PC-3 (cell line): ENCODE measurements at regions of chr6 and their contacts with region 1.

Region 1: GRCh38 chr6:35583893-35584688 is 71.4 kb upstream of the TULP1 start:
- DNase-seq: peak; percentile 85
- ATAC-seq: peak; percentile 87
- H3K4me3 ChIP-seq: no peak overlapping the region
- H3K27ac ChIP-seq: no peak overlapping the region
- H3K4me1 ChIP-seq: no peaks in the 10 kb centered on the region; the same call in 1 of the 2 replicates
- H3K27me3 ChIP-seq: no peaks in the 10 kb centered on the region
- CTCF ChIP-seq: peak; percentile 93

Region 2: GRCh38 chr6:34757687-34758274 is 826.3 kb before region 1 on chr6:
- CTCF ChIA-PET with region 1: no interaction called
- POLR2A ChIA-PET with region 1: no interaction called
- intact Hi-C with region 1: no loop called
- DNase-seq: no peak
- ATAC-seq: no peak
- H3K4me3 ChIP-seq: peak overlapping the region; percentile 82
- H3K27ac ChIP-seq: peak overlapping the region; percentile 88
- H3K4me1 ChIP-seq: no peaks in the 10 kb centered on the region
- H3K27me3 ChIP-seq: no peaks in the 10 kb centered on the region
- CTCF ChIP-seq: no peak

Region 3: DNA sequence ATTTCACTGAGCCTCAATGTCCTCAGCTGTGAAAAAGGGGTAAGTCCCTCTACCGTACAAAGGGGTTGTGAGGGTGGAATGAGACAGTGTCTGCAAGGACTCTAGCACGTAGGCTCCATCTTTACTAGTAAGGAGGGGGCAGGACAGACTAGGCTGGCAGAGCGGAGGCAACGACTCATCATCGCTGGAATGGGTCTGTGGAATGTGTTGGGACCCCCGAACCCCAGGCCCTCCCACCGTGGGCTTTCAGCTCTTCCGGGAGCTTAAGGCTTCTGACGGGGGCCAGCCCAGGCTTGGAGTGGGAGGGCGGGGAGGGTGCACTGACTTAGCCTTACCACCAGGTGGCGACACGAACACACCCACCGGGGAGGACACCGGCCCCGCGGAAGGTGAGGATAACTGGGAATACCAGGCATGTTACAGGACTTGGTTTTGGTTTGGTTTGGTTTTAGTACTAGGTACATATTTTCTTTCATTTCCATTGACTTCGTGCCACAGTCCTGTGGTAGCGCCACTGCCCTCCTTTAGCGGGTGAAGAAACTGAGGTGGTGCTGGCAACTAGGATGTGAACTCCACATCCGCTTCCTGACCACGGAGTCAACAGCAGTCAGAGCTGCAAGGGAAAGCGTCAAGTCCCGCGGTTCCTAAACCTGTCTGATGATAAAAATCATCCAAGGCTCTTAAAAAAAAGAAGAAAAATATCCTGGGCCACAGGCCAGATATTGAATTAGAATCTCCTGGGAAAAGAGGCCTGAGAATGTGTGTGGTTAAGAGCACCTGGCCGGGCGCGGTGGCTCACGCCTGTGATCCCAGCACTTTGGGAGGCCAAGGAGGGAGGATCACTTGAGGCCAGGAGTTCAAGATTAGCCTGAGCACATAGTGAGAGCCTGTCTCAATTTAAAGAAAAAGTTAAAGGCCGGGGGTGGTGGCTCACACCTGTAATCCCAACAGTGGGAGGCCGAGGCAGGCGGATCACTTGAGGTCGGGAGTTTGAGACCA is 61.1 kb before region 1 on chr6:
- CTCF ChIA-PET with region 1: no interaction called
- POLR2A ChIA-PET with region 1: no interaction called
- intact Hi-C with region 1: loop called (anchors 2 kb)
- DNase-seq: peak; percentile 82
- ATAC-seq: peak; percentile 98
- H3K4me3 ChIP-seq: peak overlapping the region; percentile 62
- H3K27ac ChIP-seq: no peak overlapping the region
- H3K4me1 ChIP-seq: no peaks in the 10 kb centered on the region
- H3K27me3 ChIP-seq: no peaks in the 10 kb centered on the region
- CTCF ChIP-seq: peak; percentile 90

Region 4: GRCh38 chr6:35601331-35602132 is 17.4 kb after region 1 on chr6:
- CTCF ChIA-PET with region 1: no interaction called
- POLR2A ChIA-PET with region 1: no interaction called
- intact Hi-C with region 1: loop called (anchors 2 kb)
- DNase-seq: peak; percentile 88
- ATAC-seq: peak; percentile 72
- H3K4me3 ChIP-seq: peak overlapping the region; percentile 50
- H3K27ac ChIP-seq: peak overlapping the region; percentile 79
- H3K4me1 ChIP-seq: peaks cover 62% of the 10 kb centered on the region
- H3K27me3 ChIP-seq: no peaks in the 10 kb centered on the region
- CTCF ChIP-seq: no peak

Region 5: GRCh38 chr6:35624341-35625070 is 40.4 kb after region 1 on chr6:
- CTCF ChIA-PET with region 1: interaction called, 8 read pairs
- POLR2A ChIA-PET with region 1: no interaction called
- intact Hi-C with region 1: loop called (anchors 1 kb)
- DNase-seq: peak; percentile 44
- ATAC-seq: peak; percentile 65
- H3K4me3 ChIP-seq: no peak overlapping the region
- H3K27ac ChIP-seq: no peak overlapping the region
- H3K4me1 ChIP-seq: peaks cover 1% of the 10 kb centered on the region; the same call in 1 of the 2 replicates
- H3K27me3 ChIP-seq: no peaks in the 10 kb centered on the region
- CTCF ChIP-seq: peak; percentile 65

Region 6: GRCh38 chr6:35688581-35689322 is 104.7 kb after region 1 on chr6 and contains the start of gene FKBP5:
- CTCF ChIA-PET with region 1: no interaction called
- POLR2A ChIA-PET with region 1: no interaction called
- intact Hi-C with region 1: loop called (anchors 1 kb)
- DNase-seq: peak; percentile 91
- ATAC-seq: peak; percentile 93
- H3K4me3 ChIP-seq: peak within 1 kb of the TSS; percentile 90
- H3K27ac ChIP-seq: no peak within 1 kb of the TSS
- H3K4me1 ChIP-seq: peaks cover 7% of the 10 kb centered on the region; the same call in 1 of the 2 replicates
- H3K27me3 ChIP-seq: no peaks in the 10 kb centered on the region
- CTCF ChIP-seq: no peak
- total RNA-seq, gene FKBP5: 11.9 and 12.4 TPM in 2 replicates

Region 7: DNA sequence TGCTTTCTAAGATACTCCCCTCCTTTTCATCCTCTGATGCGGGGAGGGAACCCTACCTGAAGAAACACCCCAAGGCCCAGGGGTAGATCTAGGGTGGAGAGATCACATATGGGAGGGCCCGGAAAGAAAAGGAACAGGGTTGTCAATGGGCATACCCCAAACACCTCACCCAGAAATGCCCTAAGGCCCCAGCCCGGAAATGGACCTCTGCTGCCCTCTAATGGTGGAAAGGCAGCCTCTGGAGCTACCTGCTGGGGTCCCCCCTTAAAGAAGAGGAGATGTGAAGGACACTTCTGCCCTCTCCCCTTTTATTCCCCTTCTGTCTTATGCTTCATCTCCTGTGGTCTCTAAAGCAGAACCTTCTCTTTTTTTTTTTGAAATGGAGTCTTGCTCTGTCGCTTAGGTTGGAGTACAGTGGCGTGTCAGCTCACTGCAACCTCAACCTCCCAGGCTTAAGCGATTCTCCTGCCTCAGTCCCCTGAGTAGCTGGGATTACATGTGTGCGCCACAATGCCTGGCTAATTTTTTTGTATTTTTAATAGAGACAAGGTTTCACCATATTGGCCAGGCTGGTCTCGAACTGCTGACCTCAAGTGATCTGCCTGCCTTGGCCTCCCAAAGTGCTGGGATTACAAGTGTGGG is 152.3 kb after region 1 on chr6:
- CTCF ChIA-PET with region 1: interaction called, 13 read pairs
- POLR2A ChIA-PET with region 1: no interaction called
- intact Hi-C with region 1: loop called (anchors 1 kb)
- DNase-seq: peak; percentile 81
- ATAC-seq: peak; percentile 14; the same call in 1 of the 2 replicates
- H3K4me3 ChIP-seq: no peak overlapping the region
- H3K27ac ChIP-seq: no peak overlapping the region
- H3K4me1 ChIP-seq: peaks cover 7% of the 10 kb centered on the region
- H3K27me3 ChIP-seq: no peaks in the 10 kb centered on the region
- CTCF ChIP-seq: peak; percentile 93